Head of caudate nucleus (tissue), 42 donors: ENCODE measurements at regions of chr5 and their contacts with region 1.

Region 1: DNA sequence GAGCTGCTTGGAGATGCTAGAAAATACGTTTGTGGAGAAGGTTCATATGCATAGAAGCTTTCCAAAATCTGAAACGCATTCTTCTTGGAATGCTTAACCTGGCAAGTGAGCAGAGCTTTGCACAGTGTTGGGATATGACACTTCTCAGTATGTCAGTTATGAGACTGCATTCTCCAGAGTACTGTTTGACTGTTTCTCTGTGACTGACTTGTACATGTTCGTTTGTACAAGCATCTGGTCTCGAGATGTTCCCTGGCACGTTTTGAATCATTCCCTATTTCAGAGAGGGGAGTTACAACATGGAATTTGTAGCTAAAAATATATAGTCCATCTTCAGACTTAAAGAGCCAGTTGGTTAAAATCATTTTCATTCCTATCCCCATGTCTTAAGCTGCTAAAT is 272.4 kb downstream of the ARRDC3 start:
- DNase-seq: no peak

Region 2: DNA sequence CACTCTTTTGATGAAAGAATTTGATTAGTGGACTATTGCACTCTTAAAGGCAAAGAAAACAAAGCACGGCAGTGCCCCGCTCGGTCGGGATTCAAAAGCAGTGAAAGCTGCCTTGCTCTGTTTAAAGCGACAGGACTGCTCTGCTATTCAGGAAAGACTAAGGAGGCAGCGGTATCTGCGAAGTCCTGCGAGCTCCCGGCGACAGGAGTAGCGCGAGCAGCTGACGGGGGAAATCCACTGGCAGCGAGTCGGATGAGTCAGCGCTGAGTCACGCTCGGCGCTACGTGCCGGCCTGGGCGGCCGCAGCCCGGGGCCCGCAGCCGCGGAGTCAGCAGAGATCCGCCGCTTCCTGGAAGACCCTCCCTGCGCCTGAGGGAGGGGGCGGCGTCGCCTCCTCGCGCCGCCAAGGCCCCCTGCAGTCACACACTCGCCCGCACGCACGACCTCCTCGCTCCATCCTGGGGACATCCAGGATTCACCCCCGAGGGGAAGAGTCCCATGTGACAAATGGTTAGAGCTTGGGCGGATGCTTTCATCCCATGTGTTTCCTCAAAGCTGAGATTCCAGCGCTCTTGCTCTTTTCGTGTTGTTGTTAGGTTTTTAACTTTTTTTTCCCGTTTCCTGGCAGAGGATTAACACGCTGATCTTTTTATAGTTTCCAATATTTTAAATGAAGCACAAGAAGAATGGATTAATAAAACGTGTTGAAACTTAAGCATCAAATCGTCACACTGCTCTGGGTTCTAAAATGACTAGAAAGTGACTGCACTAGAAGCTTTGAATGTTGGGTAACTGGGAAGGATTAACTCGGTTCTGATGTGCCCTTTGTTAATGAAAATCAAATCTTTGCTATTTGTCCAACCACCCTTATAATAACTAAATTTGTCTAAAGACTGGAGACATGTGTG is 169.9 kb after region 1 on chr5:
- intact Hi-C with region 1: loop called (anchors 10 kb)
- DNase-seq: peak; percentile 82 to 97 (median 94)